HEK293 (cell line): ENCODE measurements at regions of chr7 and their contacts with region 1.

Region 1: DNA sequence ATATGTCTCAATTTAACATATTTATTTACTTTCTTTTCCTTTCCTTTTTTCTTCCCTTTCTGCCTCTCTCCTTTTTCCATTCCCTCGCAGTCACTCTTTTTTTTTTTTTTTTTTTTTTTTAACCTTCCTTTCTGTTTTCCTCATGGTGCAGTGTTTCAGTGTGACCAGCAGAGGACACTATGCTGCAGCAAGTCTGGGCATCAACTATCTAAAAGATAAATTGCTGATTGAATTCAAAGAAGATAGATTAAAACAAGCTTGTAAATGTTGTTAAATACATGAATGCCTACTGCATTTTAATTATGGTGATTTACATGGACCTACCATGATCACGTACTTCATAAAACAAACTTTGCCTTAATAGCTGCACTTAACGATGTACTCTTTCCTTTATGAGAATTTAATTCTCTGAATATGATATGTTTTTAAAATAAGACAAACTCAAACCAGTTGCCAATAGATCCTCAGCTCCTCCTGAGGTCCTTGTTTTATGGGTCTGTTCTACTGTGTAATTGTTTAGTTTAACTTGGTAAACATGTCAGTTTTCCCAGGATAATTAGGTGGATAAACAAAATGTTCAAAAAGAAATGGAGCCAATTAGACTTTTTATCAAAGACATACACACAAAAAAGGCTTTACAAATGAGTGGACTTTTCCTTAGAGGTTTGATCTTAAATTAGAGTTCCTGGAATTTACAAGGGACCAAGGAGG is 101.0 kb upstream of the AGR3 start:
- H3K4me3 ChIP-seq: no peak overlapping the region
- H3K27ac ChIP-seq: no peak overlapping the region
- H3K4me1 ChIP-seq: 0 out of 2 replicates have a peak, but pooled peaks cover 3% of the 10 kb centered on the region
- CTCF ChIP-seq: peak; percentile 73

Region 2: DNA sequence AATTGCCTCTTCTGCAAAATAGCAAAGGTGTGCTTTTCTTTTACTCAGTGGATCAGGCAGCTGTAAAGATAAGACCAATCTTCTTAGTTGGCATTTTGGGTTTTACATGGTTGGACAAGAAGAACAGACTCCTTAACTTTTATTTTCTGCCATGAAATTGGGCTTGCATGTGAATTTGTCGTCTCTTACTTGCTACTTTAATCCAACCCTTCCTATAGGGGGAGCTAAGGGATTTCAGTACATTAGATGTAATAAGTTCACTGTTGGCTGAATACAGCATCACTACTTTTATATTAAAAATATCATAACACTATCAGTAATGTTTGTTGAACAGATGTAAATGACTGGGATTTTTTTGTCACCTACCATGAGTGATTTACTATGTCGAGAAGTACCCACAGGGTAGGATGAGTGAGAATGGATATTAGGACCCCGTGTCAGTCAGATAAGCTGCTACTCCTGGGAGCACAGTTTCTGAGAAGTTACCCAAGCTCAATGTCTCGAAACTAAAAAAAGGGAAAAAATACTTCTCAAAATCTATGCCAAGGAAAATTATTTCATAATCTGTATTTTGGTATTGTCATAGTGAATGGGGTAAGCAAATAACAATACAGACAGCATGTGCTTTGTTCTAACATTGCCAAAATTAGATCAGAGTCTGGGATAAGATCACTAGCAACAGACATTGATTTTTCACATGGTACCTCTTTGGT is 26.4 kb after region 1 on chr7:
- CTCF ChIA-PET with region 1: interaction called, 11 read pairs
- POLR2A ChIA-PET with region 1: no interaction called
- H3K4me3 ChIP-seq: no peak overlapping the region
- H3K27ac ChIP-seq: no peak overlapping the region
- H3K4me1 ChIP-seq: no peaks in the 10 kb centered on the region
- CTCF ChIP-seq: no peak

Region 3: GRCh38 chr7:17134786-17135185 is 152.0 kb after region 1 on chr7:
- CTCF ChIA-PET with region 1: no interaction called
- POLR2A ChIA-PET with region 1: no interaction called
- H3K4me3 ChIP-seq: no peak overlapping the region
- H3K27ac ChIP-seq: no peak overlapping the region
- H3K4me1 ChIP-seq: peaks cover 12% of the 10 kb centered on the region
- CTCF ChIP-seq: no peak

Region 4: DNA sequence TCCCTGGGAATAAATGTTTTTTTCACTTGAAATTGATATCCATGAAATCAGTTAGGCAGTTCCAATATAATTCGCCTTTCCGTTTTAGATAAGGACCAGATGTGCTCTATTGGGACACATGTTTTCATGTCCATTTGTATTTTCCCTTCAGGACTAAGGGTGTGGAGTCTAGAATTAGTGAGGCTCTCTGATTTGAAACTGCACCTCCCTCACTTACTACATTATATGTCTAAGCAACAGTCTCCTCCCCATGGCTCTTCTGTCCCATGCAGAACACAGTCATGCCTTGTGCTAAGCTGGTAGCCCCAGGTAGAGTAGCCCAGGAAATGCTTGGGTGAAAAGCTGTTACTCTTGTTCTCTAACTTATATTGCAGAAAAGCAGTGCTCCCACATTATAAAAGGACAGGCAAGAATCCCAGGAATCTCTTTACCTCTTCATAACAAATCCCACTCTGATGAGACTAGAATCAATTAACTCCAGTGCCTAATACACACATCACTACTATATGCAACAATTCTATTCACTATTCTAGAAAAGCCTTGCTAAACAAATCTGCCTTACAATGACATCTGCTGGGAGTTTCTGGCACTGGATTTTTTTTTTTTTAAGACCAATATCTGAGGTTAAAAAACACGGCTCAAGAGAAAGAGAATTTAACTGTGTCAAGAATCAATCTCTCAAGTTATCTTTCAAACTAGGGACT is 663.6 kb after region 1 on chr7:
- CTCF ChIA-PET with region 1: interaction called, 10 read pairs
- POLR2A ChIA-PET with region 1: no interaction called
- H3K4me3 ChIP-seq: no peak overlapping the region
- H3K27ac ChIP-seq: no peak overlapping the region
- H3K4me1 ChIP-seq: no peaks in the 10 kb centered on the region
- CTCF ChIP-seq: no peak